GM13977 (cell line): ENCODE measurements at regions of chr19 and their contacts with region 1.

Region 1: GRCh38 chr19:1275260-1275975 is at the start of gene FAM174C:
- DNase-seq: peak; percentile 99
- CTCF ChIP-seq: no peak

Region 2: GRCh38 chr19:1177322-1178114 is 97.9 kb before region 1 on chr19:
- in situ Hi-C with region 1: no loop called
- DNase-seq: no peak
- CTCF ChIP-seq: no peak

Region 3: DNA sequence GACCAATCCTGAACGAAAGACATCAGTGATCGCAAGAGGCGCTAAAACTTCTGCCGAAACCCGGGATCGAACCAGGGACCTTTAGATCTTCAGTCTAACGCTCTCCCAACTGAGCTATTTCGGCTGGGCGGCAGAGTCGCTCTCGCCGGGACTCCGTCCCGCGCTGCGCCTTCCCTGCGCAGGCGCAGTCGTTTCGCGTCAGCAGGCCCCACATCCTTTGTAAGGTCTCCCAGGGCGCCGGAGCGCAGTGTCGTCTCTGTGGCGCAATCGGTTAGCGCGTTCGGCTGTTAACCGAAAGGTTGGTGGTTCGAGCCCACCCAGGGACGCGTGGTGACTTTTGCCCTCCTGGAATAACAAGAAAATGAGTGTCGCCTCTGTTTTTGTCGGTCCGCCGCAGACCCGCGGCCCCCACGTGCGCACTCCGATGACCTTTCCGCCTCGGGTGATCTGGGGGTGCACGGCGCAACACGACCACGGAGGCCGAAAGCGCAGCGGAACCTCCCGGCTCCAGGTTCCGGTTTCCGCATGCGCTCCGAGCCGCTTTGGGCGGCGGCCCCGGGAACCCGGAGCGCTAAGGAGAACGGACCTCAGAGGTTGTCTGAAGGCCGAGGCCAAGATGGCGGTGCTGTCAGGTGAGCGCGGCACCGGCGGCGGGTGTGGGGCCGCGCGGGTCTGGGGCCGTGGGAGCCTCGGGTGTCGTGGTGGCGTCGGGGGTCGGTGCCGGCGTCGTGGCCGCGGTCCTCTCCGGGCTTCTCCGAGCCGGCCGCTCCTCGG is 108.1 kb after region 1 on chr19 and contains the start of gene NDUFS7:
- in situ Hi-C with region 1: loop called (anchors 25 kb)
- DNase-seq: peak; percentile 90
- CTCF ChIP-seq: peak; percentile 25

Region 4: GRCh38 chr19:1406774-1407499 is 131.5 kb after region 1 on chr19:
- in situ Hi-C with region 1: no loop called
- DNase-seq: peak; percentile 100
- CTCF ChIP-seq: peak; percentile 47

Region 5: GRCh38 chr19:1577090-1577928 is 301.9 kb after region 1 on chr19:
- in situ Hi-C with region 1: no loop called
- DNase-seq: no peak
- CTCF ChIP-seq: no peak